Activated naive CD4-positive, alpha-beta T cell treated with anti-CD3 and anti-CD28 coated beads for 36 hours (primary cell): ENCODE measurements at regions of chr3 and their contacts with region 1.

Region 1: GRCh38 chr3:49929331-49930240 is at the start of gene MON1A:
- DNase-seq: peak; percentile 89
- H3K4me3 Mint-ChIP-seq: peak within 1 kb of the TSS; percentile 81
- H3K27ac Mint-ChIP-seq: peak within 1 kb of the TSS; percentile 70
- H3K4me1 Mint-ChIP-seq: peaks cover 32% of the 10 kb centered on the region
- H3K27me3 Mint-ChIP-seq: no peaks in the 10 kb centered on the region
- total RNA-seq, gene MON1A: 5.4 to 5.9 TPM

Region 2: GRCh38 chr3:49362549-49362948 is 567.0 kb before region 1 on chr3:
- CTCF ChIA-PET with region 1: no interaction called
- intact Hi-C with region 1: no loop called
- DNase-seq: no peak
- H3K4me3 Mint-ChIP-seq: no peak overlapping the region
- H3K27ac Mint-ChIP-seq: peak overlapping the region; percentile 75
- H3K4me1 Mint-ChIP-seq: peaks cover 13% of the 10 kb centered on the region
- H3K27me3 Mint-ChIP-seq: no peaks in the 10 kb centered on the region

Region 3: DNA sequence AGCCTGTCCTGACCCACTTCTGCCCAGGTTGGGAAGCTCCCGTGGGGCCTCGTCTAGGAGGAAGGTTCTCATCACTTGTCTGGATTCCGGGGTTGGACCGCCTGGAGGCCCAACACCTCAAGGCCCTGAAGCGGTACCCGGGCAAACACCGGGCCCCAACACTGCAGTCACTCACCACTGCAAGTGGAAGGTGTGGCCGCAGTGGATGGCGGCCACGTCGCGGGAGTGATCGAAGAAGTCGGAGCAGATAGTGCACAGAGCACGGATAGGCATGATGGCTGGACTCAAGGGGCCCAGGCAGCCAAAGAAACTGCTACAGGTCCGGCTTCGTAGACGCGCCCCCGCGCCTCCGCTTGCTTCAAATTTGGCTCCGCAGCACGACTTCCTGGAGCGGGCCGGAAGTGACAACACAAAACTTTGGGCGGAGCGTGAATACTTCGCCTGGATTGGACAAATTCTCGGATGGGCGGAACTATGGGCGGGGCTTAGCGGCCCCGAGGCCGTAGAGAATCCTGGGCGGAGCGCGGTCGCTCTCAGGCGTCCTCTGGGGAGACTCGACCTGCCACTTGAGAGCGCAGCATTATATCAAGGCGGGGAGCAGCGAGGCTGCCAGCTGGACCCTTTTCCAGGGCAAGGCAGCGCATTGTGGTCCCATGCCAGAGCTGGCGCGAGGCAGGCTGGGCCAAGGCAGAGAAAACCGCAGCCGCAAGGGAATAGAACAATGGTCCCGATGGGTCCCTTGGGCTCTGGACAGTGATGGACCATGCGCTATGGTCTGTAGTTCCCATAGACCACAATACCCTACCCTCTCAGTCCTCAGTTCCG is 73.2 kb before region 1 on chr3 and contains the start of gene TRAIP:
- CTCF ChIA-PET with region 1: interaction called, 3 read pairs
- intact Hi-C with region 1: loop called (anchors 1 kb)
- DNase-seq: peak; percentile 97
- H3K4me3 Mint-ChIP-seq: peak within 1 kb of the TSS; percentile 94
- H3K27ac Mint-ChIP-seq: peak within 1 kb of the TSS; percentile 65
- H3K4me1 Mint-ChIP-seq: peaks cover 13% of the 10 kb centered on the region
- H3K27me3 Mint-ChIP-seq: no peaks in the 10 kb centered on the region
- total RNA-seq, gene TRAIP: 21.5 to 25.7 TPM

Region 4: GRCh38 chr3:49882166-49882565 is 47.4 kb before region 1 on chr3:
- CTCF ChIA-PET with region 1: no interaction called
- intact Hi-C with region 1: no loop called
- DNase-seq: no peak
- H3K4me3 Mint-ChIP-seq: no peak overlapping the region
- H3K27ac Mint-ChIP-seq: no peak overlapping the region
- H3K4me1 Mint-ChIP-seq: no peaks in the 10 kb centered on the region
- H3K27me3 Mint-ChIP-seq: peaks cover 2% of the 10 kb centered on the region

Region 5: GRCh38 chr3:49939858-49940666 is 10.5 kb after region 1 on chr3 and contains the start of gene RBM6:
- CTCF ChIA-PET with region 1: interaction called, 6 read pairs
- intact Hi-C with region 1: loop called (anchors 1 kb)
- DNase-seq: peak; percentile 98
- H3K4me3 Mint-ChIP-seq: peak within 1 kb of the TSS; percentile 98
- H3K27ac Mint-ChIP-seq: peak within 1 kb of the TSS; percentile 93
- H3K4me1 Mint-ChIP-seq: peaks cover 29% of the 10 kb centered on the region
- H3K27me3 Mint-ChIP-seq: no peaks in the 10 kb centered on the region
- total RNA-seq, gene RBM6: 89.1 to 98.2 TPM

Region 6: DNA sequence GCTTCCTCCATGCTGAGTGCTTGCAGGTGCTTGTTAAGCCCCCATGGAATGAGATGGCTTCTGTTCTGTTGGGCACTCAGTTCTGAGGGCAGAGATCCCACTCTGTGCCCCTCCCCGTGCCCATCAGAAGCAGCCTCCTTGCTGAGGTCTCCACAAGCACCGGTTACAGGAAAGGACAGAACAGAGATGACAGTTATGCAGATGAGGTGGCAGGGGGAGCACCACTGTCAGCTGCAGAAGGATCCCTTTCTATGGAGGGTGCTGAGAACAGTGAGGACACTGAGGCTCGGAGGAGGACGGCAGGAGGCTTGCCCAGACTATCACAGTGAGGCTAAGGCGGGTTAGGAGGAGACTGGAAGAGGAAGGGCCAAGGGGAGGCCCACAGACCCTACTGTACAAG is 561.4 kb after region 1 on chr3:
- CTCF ChIA-PET with region 1: no interaction called
- intact Hi-C with region 1: no loop called
- DNase-seq: peak; percentile 58
- H3K4me3 Mint-ChIP-seq: no peak overlapping the region
- H3K27ac Mint-ChIP-seq: no peak overlapping the region
- H3K4me1 Mint-ChIP-seq: peaks cover 9% of the 10 kb centered on the region
- H3K27me3 Mint-ChIP-seq: no peaks in the 10 kb centered on the region